Adrenal gland (tissue), 19 donors: ENCODE measurements at regions of chr13 and their contacts with region 1.

Region 1: DNA sequence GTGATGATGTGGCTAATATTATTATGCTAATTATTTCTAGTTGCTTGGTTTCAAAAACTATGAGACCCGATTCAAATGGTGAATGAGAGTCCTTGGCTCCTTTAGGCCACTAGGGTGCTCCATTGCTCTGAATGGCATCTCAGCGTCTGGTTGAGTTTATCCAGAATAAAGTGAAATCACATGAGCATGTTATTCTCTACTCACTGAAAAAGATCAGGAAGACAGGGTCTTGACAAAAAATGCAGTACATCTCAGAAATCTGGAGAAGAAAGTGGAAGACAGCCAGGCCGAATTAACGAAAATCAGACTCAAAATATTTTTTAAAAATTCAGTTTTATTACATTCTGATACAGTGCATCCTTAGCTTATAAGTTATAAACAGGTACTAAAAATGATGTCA is 516.2 kb downstream of the MYO16 start:
- DNase-seq: peak; percentile 48 to 82 (median 65)
- H3K4me3 ChIP-seq: no peak overlapping the region
- H3K27ac ChIP-seq: no peak overlapping the region
- H3K4me1 ChIP-seq: peaks cover 0 to 7% of the 10 kb centered on the region in 2 donors
- H3K27me3 ChIP-seq: no peaks in the 10 kb centered on the region
- CTCF ChIP-seq: peak; percentile 72 to 84 (median 78)
- POLR2A ChIP-seq: no peak

Region 2: DNA sequence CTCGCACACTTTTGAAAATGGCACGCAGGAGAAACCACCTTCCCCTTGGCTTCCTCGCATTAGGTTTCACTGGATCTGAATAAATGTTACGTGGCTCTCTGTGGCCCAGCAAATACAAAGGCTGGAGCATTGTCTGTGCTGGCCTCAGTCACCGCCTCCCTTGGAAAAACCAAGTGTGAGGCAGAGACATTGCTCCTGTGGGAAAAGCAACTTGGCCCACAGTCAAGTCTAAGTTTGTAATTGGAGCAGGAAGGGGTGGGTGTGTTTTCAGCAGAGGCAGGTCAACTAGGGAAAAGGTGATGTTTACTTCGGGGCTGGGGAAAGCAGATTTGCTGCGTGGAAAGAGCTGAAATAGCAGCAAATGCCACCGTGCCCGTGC is 539.2 kb after region 1 on chr13:
- intact Hi-C with region 1: loop called in 1 of 2 experiments (anchors 10 kb)
- DNase-seq: no peak
- H3K4me3 ChIP-seq: no peak overlapping the region
- H3K27ac ChIP-seq: no peak overlapping the region
- H3K4me1 ChIP-seq: peaks cover 9 to 10% of the 10 kb centered on the region in 2 donors
- H3K27me3 ChIP-seq: no peaks in the 10 kb centered on the region
- CTCF ChIP-seq: no peak
- POLR2A ChIP-seq: no peak